Activated T-helper 2 cell treated with anti-CD3 and anti-CD28 coated beads, Interferon-gamma antibody, Interleukin-2, Interleukin-4, amounts not matched to agents 10 μg/mL and 5 μg/mL and 100 μg/mL, durations not matched to agents 14 hours and 24 hours and 36 hours (primary cell): ENCODE measurements at regions of chr14 and their contacts with region 1.

Region 1: DNA sequence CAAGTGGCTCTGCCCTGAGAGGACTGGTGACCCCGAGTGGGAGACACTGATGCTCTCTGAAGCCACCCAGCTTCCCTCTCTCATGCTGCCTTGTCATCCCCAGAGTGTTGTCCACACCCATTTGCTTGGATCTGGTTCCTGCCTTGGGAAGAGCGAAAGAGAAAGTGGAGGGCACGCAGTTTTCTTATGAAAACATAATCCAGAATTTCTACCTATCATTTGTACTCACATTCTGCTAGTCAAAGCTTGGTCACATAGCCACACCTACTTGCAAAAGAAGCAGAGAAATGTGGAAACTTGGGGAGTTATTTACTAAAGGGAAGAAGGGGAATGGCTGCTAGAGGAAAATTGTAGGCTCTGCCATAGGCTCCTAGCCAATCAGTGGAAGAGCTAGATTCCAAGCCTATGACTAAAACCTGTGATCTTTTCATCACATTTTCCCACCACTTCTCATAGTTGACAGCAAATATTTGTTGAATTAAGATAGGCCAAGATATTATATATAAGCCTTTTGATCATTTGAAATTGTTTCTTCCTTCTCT is 326.3 kb downstream of the ZFP36L1 start:
- DNase-seq: no peak
- H3K4me3 Mint-ChIP-seq: no peak overlapping the region
- H3K27ac Mint-ChIP-seq: no peak overlapping the region
- H3K4me1 Mint-ChIP-seq: peaks cover 39% of the 10 kb centered on the region
- H3K27me3 Mint-ChIP-seq: no peaks in the 10 kb centered on the region

Region 2: GRCh38 chr14:68444449-68445168 is 22.0 kb before region 1 on chr14:
- intact Hi-C with region 1: no loop called
- DNase-seq: no peak
- H3K4me3 Mint-ChIP-seq: no peak overlapping the region
- H3K27ac Mint-ChIP-seq: no peak overlapping the region
- H3K4me1 Mint-ChIP-seq: no peaks in the 10 kb centered on the region
- H3K27me3 Mint-ChIP-seq: no peaks in the 10 kb centered on the region

Region 3: GRCh38 chr14:68482772-68483395 is 16.3 kb after region 1 on chr14:
- intact Hi-C with region 1: loop called (anchors 1 kb)
- DNase-seq: no peak
- H3K4me3 Mint-ChIP-seq: no peak overlapping the region
- H3K27ac Mint-ChIP-seq: no peak overlapping the region
- H3K4me1 Mint-ChIP-seq: peaks cover 34% of the 10 kb centered on the region
- H3K27me3 Mint-ChIP-seq: no peaks in the 10 kb centered on the region

Region 4: GRCh38 chr14:68637106-68638021 is 170.8 kb after region 1 on chr14:
- intact Hi-C with region 1: no loop called
- DNase-seq: no peak
- H3K4me3 Mint-ChIP-seq: no peak overlapping the region
- H3K27ac Mint-ChIP-seq: no peak overlapping the region
- H3K4me1 Mint-ChIP-seq: no peaks in the 10 kb centered on the region
- H3K27me3 Mint-ChIP-seq: no peaks in the 10 kb centered on the region